ENCODE measurements at regions of chr11 and their contacts with region 1.

Region 1: GRCh38 chr11:65329944-65330403 is 3.7 kb upstream of the DPF2 start:
- DNase-seq: peak; percentile 88
- H3K4me3 ChIP-seq: no peak overlapping the region
- H3K27ac ChIP-seq: peak overlapping the region; percentile 20
- H3K4me1 ChIP-seq: peaks cover 14% of the 10 kb centered on the region
- H3K27me3 ChIP-seq: no peaks in the 10 kb centered on the region
- CTCF ChIP-seq: peak; percentile 67 to 70
- POLR2A ChIP-seq: no peak

Region 2: DNA sequence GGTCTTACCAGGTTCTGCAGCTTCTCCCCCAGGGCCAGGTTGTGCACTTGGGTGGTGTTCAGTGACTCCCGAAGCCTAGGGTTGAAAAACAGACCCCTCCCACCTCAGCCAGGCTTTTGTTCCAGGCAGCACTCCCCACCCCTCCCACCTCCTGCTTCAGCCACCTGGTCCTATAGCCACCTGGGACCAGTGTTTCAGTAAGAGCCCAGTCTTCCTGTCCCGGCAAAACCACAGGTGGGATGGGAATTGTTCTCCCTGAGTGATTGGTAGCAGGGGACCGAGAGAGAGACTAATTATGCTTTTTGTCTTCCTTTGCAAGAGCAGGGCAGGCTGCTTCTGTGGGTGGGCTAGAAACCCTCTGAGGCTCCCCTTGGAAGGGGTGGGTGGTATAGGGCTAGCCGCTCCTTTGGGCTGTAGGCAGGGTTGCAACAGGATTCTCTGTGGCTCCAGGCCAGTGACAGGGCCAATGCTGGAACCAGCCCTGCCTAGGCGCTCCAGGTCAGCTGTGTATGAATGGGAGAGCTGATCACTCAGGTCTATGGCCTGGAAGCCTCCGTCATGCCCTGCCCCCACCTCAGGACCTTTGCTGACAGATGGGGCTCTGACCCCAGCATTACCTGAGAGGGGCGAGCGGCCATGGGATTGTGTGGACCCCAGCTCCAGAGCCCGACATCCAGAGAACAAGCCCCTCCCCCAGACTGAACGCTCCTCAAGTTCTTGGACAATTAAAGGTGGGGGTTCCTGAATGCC is 263.0 kb before region 1 on chr11:
- CTCF ChIA-PET with region 1: no interaction called
- POLR2A ChIA-PET with region 1: interaction called, 12 read pairs
- dilution Hi-C with region 1: no loop called
- intact Hi-C with region 1: no loop called
- DNase-seq: no peak
- H3K4me3 ChIP-seq: no peak overlapping the region
- H3K27ac ChIP-seq: no peak overlapping the region
- H3K4me1 ChIP-seq: no peaks in the 10 kb centered on the region
- H3K27me3 ChIP-seq: no peaks in the 10 kb centered on the region
- CTCF ChIP-seq: no peak
- POLR2A ChIP-seq: no peak

Region 3: GRCh38 chr11:65219930-65220213 is 110.1 kb before region 1 on chr11:
- CTCF ChIA-PET with region 1: interaction called, 62 read pairs
- POLR2A ChIA-PET with region 1: no interaction called
- dilution Hi-C with region 1: no loop called
- intact Hi-C with region 1: loop called (anchors 1 kb)
- DNase-seq: no peak
- H3K4me3 ChIP-seq: no peak overlapping the region
- H3K27ac ChIP-seq: no peak overlapping the region
- H3K4me1 ChIP-seq: peaks cover 6% of the 10 kb centered on the region
- H3K27me3 ChIP-seq: no peaks in the 10 kb centered on the region
- CTCF ChIP-seq: no peak
- POLR2A ChIP-seq: no peak

Region 4: GRCh38 chr11:65261591-65262380 is 68.2 kb before region 1 on chr11 and contains the start of gene POLA2:
- CTCF ChIA-PET with region 1: interaction called, 28 read pairs
- POLR2A ChIA-PET with region 1: interaction called, 6 read pairs
- dilution Hi-C with region 1: no loop called
- intact Hi-C with region 1: no loop called
- DNase-seq: peak; percentile 97
- H3K4me3 ChIP-seq: peak within 1 kb of the TSS; percentile 65 to 83 (median 82)
- H3K27ac ChIP-seq: peak within 1 kb of the TSS; percentile 79
- H3K4me1 ChIP-seq: peaks cover 11% of the 10 kb centered on the region
- H3K27me3 ChIP-seq: no peaks in the 10 kb centered on the region
- CTCF ChIP-seq: no peak
- POLR2A ChIP-seq: peak; percentile 98
- total RNA-seq, gene POLA2: 24.0 and 25.4 TPM in 2 replicates

Region 5: DNA sequence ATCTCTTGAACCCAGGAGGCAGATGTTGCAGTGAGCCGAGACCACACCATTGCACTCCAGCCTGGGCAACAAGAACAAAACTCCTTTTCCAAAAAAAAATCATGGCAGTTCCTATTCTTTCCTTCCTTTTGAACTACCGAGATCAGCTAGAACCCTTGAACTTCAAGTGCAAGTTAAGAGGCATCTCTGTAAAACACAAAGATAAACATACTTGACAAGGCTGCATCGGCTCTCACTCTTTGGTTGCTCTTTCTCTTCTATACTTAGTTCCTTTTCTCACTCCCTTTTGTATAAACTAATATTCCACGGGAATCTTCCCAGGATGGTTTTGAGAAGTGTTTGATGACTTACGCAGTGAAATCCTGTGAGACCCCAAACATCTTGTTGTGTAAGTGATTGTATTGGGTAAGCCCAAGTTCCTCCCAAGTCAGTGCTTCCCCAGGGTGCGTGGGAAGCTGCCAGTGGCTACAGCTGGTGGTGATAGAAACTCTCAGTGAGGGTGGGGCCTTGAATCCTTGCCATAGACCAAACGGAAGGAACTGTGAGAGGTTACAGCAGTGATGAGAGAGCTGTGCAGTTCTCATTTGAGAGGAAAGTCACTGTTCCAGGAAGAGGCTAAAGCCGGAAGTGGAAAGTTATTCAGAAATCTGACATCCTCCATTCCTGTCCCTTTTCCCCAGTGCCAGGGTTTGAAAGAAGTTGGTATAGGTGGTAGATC is 39.4 kb before region 1 on chr11:
- CTCF ChIA-PET with region 1: interaction called, 14 read pairs
- POLR2A ChIA-PET with region 1: no interaction called
- dilution Hi-C with region 1: no loop called
- intact Hi-C with region 1: no loop called
- DNase-seq: peak; percentile 87
- H3K4me3 ChIP-seq: no peak overlapping the region
- H3K27ac ChIP-seq: peak overlapping the region; percentile 35
- H3K4me1 ChIP-seq: peaks cover 29% of the 10 kb centered on the region
- H3K27me3 ChIP-seq: no peaks in the 10 kb centered on the region
- CTCF ChIP-seq: no peak
- POLR2A ChIP-seq: peak; percentile 57

Region 6: DNA sequence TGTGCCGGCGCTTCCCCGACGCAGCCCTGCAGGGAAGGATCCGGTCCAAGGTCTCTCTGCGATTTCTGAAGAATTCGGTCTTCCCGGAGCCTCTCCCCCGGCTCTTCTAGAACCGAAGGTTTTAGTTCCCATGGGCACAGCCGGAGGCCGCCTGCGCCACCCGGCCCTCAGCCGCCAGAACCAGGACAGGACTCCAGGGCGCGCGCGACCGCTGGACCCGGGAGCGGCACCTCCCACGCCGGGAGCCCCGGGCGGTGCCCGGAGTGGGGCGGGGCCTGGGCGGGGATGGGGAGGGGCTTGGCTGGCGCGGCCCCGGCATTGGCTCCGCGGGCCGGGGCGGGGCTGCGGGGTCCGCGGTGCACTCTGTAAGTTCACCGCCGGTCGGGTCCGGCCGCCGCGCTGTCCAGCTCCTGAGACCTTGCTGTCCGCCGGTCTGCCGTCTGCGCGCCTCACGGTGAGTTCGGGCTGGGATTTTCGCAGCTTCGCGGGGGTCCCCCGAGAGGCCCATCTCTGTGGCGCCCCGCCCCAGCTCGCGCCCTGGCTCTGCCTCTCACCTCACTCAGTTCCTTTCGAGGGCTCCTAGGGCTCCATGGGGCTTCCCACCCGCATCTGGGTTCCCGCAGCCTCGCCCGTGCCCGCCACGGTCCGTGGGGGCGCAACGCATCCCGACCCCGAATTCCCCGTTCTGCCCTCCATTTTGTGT is 15.3 kb before region 1 on chr11 and contains the start of gene CDC42EP2:
- CTCF ChIA-PET with region 1: interaction called, 345 read pairs
- POLR2A ChIA-PET with region 1: interaction called, 6 read pairs
- dilution Hi-C with region 1: no loop called
- intact Hi-C with region 1: loop called (anchors 1 kb)
- DNase-seq: peak; percentile 88
- H3K4me3 ChIP-seq: peak within 1 kb of the TSS; percentile 87 to 97 (median 90)
- H3K27ac ChIP-seq: peak within 1 kb of the TSS; percentile 84
- H3K4me1 ChIP-seq: peaks cover 31% of the 10 kb centered on the region
- H3K27me3 ChIP-seq: no peaks in the 10 kb centered on the region
- CTCF ChIP-seq: no peak
- POLR2A ChIP-seq: peak; percentile 98
- total RNA-seq, gene CDC42EP2: 23.4 and 23.9 TPM in 2 replicates

Region 7: DNA sequence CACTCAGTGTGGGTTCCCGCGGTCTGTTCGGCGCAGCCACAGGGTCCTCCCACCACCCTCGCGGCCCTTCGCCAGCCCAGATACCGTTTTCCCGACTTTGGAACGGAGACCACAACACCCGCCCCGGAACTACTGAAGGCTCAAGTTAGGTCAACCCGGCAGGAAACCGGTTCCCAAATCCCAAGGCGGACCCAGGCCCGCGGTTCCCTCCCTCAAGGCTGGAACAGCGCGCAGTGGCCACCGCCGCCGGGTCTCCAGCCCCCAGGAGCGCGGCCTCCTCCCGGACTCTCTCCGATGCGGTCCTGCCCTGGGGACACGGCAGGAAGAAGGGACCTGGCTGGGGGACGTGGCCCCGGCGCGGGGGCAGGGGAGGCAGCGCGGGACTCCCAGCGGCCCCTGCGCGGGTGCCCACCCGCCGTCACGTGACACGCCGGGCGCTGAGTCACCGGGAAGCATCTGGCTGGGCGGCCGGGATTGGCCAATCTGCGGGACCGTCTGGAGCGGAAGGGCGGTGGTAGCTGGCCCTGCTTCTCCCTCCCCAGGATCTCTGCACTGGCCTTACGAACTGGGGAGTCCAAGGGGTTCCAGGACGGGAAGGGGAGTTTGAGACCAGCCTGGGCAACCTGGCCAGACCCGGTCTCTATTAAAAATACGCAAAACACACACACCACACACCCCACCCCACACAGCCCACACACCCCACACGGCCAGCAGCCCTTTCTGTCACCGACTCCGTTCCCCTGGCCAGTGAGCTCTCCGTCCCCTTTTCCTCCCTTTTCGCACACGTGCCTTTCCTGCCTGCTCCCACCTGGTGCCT is 147.4 kb after region 1 on chr11:
- CTCF ChIA-PET with region 1: no interaction called
- POLR2A ChIA-PET with region 1: no interaction called
- dilution Hi-C with region 1: no loop called
- intact Hi-C with region 1: no loop called
- DNase-seq: peak; percentile 94
- H3K4me3 ChIP-seq: peak overlapping the region; percentile 35 to 56 (median 54)
- H3K27ac ChIP-seq: peak overlapping the region; percentile 88
- H3K4me1 ChIP-seq: peaks cover 26% of the 10 kb centered on the region
- H3K27me3 ChIP-seq: no peaks in the 10 kb centered on the region
- CTCF ChIP-seq: no peak
- POLR2A ChIP-seq: peak; percentile 95

Measured in endothelial cell of umbilical vein (primary cell).